PC-9 (cell line): ENCODE measurements at regions of chr1 and their contacts with region 1.

Region 1: GRCh38 chr1:199684686-199685273 is 342.7 kb upstream of the NR5A2 start:
- DNase-seq: peak; percentile 34 to 70
- H3K4me3 ChIP-seq: no peak overlapping the region
- H3K27ac ChIP-seq: peak overlapping the region; percentile 64
- H3K4me1 ChIP-seq: peaks cover 36% of the 10 kb centered on the region
- H3K27me3 ChIP-seq: no peaks in the 10 kb centered on the region
- CTCF ChIP-seq: peak; percentile 88

Region 2: DNA sequence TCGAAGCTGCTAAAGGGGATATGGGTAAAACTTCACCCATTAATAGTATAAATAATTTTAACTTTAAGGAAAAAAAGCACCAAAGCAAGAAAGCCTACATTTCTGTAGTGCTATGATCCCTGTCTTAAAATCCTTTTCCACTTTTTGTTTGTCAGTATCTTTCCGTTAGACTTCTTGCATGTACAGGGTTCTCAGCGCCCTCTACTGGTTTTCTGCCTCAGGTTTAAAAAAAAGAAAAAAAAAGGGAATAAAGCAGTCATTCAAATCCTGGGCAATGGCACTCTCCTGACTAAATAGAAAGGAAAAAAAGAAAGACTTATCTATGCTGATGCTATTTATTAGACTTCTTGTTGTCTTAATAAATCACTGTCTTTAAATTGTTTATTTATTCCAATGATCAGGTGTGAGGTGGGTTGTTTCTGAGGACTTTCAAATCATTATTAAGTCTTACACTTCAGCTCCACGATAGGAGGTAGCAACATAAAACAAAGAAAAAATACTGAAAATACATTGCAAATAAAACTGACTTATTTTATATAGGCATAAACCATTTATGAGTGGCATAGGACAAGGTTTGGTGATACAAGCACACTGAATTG is 132.7 kb before region 1 on chr1:
- CTCF ChIA-PET with region 1: no interaction called
- POLR2A ChIA-PET with region 1: no interaction called
- intact Hi-C with region 1: loop called (anchors 5 kb)
- DNase-seq: peak; percentile 36 to 37
- H3K4me3 ChIP-seq: no peak overlapping the region
- H3K27ac ChIP-seq: no peak overlapping the region
- H3K4me1 ChIP-seq: no peaks in the 10 kb centered on the region
- H3K27me3 ChIP-seq: no peaks in the 10 kb centered on the region
- CTCF ChIP-seq: peak; percentile 87

Region 3: GRCh38 chr1:199759268-199759724 is 74.5 kb after region 1 on chr1:
- CTCF ChIA-PET with region 1: no interaction called
- POLR2A ChIA-PET with region 1: interaction called, 4 read pairs
- intact Hi-C with region 1: loop called (anchors 2 kb)
- DNase-seq: peak; percentile 70 to 89
- H3K4me3 ChIP-seq: peak overlapping the region; percentile 37; the same call in 1 of the 2 replicates
- H3K27ac ChIP-seq: peak overlapping the region; percentile 91
- H3K4me1 ChIP-seq: peaks cover 28% of the 10 kb centered on the region
- H3K27me3 ChIP-seq: no peaks in the 10 kb centered on the region
- CTCF ChIP-seq: no peak

Region 4: DNA sequence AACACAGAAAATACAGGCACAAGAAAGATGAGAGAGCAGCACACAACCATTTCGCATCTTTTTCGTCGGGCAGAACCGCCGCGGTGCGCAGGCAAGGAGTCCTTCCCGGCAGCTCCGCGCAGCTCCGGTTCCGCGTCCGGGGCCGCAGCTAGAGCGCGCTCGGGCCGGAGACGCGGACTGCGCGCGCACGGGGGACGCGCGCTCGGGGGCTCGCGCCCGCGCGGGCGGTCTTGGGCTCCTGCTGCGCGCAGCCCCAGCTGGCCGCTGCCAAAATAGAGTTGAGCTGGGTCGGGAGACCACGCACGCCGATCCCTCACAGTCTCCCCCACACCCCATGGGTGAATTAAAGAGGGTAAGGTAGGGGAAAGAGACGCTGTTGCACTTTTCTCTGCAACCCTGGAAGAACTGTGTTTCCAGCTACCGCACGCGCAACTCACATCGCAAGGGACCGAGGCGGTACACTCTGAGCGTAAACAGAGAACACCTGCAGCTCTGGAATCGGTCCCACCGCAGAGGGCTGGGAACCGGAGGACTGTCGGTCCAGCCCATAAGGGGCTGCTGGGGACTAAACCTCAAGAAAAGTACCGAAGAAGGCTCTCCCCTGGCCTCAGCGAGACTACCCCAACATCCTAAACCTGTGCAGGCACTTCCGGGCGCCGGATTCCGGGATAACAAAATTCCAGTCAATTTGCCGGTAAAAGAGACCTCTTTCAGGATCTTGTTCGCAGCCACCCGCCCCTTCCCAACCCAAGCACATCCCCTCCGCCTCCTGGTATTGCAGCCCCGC is 344.4 kb after region 1 on chr1:
- CTCF ChIA-PET with region 1: no interaction called
- POLR2A ChIA-PET with region 1: no interaction called
- intact Hi-C with region 1: loop called (anchors 5 kb)
- DNase-seq: peak; percentile 38 to 63
- H3K4me3 ChIP-seq: peak overlapping the region; percentile 77
- H3K27ac ChIP-seq: peak overlapping the region; percentile 40
- H3K4me1 ChIP-seq: peaks cover 22% of the 10 kb centered on the region
- H3K27me3 ChIP-seq: no peaks in the 10 kb centered on the region
- CTCF ChIP-seq: no peak

Region 5: DNA sequence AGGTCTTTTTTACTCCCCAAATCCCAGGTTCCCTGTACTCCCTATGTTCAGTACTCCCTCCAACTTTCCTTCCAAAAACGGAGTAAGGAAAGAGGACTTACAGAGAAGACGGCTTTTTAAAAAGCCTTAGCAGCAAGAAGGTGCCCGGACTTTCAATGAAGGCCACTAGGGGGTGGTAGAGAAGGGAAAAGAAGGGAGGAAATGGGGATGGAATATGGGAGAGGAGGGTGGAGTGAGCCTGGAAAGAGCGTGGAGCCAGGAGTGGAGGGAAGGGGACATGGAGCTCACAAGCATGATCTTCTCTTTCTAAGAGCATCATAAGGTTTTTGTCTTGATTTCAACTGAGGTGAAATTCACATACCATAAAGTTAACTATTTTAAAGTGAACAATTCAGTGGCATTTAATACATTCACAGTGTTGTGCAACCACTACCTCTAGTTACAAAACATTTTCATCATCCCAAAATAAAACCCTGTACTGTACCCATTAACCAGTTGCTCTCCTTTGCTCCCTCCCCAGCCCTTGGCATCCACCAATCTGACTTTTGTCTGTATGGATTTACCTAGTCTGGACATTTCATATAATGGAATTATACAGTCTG is 595.1 kb after region 1 on chr1:
- CTCF ChIA-PET with region 1: interaction called, 3 read pairs
- POLR2A ChIA-PET with region 1: no interaction called
- intact Hi-C with region 1: loop called (anchors 1 kb)
- DNase-seq: peak in 1 of 2 experiments; percentile 23
- H3K4me3 ChIP-seq: no peak overlapping the region
- H3K27ac ChIP-seq: no peak overlapping the region
- H3K4me1 ChIP-seq: no peaks in the 10 kb centered on the region
- H3K27me3 ChIP-seq: no peaks in the 10 kb centered on the region
- CTCF ChIP-seq: peak; percentile 75

Region 6: GRCh38 chr1:200510228-200510623 is 825.4 kb after region 1 on chr1:
- CTCF ChIA-PET with region 1: no interaction called
- POLR2A ChIA-PET with region 1: no interaction called
- intact Hi-C with region 1: loop called (anchors 1 kb)
- DNase-seq: peak; percentile 64 to 68
- H3K4me3 ChIP-seq: no peak overlapping the region
- H3K27ac ChIP-seq: no peak overlapping the region
- H3K4me1 ChIP-seq: no peaks in the 10 kb centered on the region
- H3K27me3 ChIP-seq: no peaks in the 10 kb centered on the region
- CTCF ChIP-seq: peak; percentile 96